ENCODE measurements at regions of chr1 and their contacts with region 1.

Region 1: GRCh38 chr1:234610348-234611152 is 572 bp upstream of the IRF2BP2 start:
- DNase-seq: peak; percentile 97 to 98 (median 97)
- ATAC-seq: peak; percentile 42 to 85 (median 72)
- H3K4me3 ChIP-seq: peak overlapping the region; percentile 32 to 93 (median 62)
- H3K27ac ChIP-seq: peak overlapping the region; percentile 94 to 100 (median 99)
- H3K4me1 ChIP-seq: peaks cover 9 to 43% (median 32%) of the 10 kb centered on the region in 12 donors
- H3K27me3 ChIP-seq: no peaks in the 10 kb centered on the region
- CTCF ChIP-seq: peak in 1 of 12 donors; percentile 7
- POLR2A ChIP-seq: peak; percentile 61 to 99

Region 2: GRCh38 chr1:234553156-234553863 is 57.2 kb before region 1 on chr1:
- intact Hi-C with region 1: no loop called
- DNase-seq: peak in 2 of 5 donors; percentile 45 to 71
- ATAC-seq: peak; percentile 63 to 93 (median 90)
- H3K4me3 ChIP-seq: no peak overlapping the region
- H3K27ac ChIP-seq: peak overlapping the region in 11 of 12 donors; percentile 17 to 85 (median 68)
- H3K4me1 ChIP-seq: peaks cover 0 to 25% (median 19%) of the 10 kb centered on the region in 12 donors
- H3K27me3 ChIP-seq: no peaks in the 10 kb centered on the region
- CTCF ChIP-seq: no peak
- POLR2A ChIP-seq: no peak

Region 3: DNA sequence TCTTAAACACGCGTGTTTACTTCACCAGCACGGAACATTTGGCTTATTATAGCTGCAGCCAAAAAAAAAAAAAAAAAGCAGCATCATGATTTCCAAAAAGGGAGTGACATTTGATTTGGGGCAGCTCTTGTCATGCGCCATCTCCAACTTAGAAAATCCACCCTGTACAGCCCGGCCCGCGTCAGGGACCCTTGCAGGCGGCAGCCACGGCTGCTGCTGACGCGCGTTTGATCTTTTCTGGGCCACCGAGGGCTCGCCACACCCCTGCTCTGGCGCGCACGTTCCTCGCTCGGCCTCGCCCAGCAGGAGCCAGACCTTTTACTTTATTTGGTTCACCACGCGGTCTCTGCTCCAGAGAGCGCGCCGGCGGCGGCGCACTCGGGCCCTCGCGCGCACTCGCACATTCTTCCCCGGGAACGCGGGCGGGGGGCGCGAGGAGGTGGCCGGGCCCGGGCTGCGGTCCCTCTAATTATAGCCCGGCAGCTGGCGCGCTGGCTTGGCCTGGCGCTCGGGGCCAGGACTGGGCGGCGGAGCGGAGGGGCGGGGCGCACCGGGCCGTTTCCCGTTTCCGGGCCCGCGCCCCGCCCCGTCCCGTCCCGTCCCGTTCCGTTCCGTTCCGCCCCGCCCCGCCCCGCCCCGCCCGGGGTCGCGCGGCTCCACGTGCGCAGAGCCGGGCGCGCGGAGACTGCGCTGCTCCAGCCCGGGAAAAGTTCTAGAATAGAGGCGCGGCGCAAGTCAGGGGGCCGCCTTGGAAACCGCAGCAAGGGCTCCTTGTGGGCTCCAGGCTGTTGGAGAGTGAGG is 10.7 kb before region 1 on chr1:
- intact Hi-C with region 1: loop called in 1 of 10 experiments (anchors 2 kb)
- DNase-seq: peak; percentile 91 to 96 (median 94)
- ATAC-seq: peak; percentile 77 to 95 (median 88)
- H3K4me3 ChIP-seq: peak overlapping the region in 11 of 12 donors; percentile 29 to 86 (median 51)
- H3K27ac ChIP-seq: peak overlapping the region; percentile 88 to 100 (median 99)
- H3K4me1 ChIP-seq: peaks cover 29 to 66% (median 50%) of the 10 kb centered on the region in 12 donors
- H3K27me3 ChIP-seq: no peaks in the 10 kb centered on the region
- CTCF ChIP-seq: peak in 1 of 12 donors; percentile 10
- POLR2A ChIP-seq: peak in 1 of 2 donors; percentile 74

Region 4: GRCh38 chr1:234862944-234863515 is 252.5 kb after region 1 on chr1:
- intact Hi-C with region 1: loop called in 1 of 10 experiments (anchors 5 kb)
- DNase-seq: peak; percentile 79 to 88 (median 85)
- ATAC-seq: peak; percentile 62 to 79 (median 73)
- H3K4me3 ChIP-seq: peak overlapping the region in 5 of 12 donors; percentile 1 to 27 (median 8)
- H3K27ac ChIP-seq: peak overlapping the region; percentile 63 to 82 (median 77)
- H3K4me1 ChIP-seq: peaks cover 0 to 46% (median 32%) of the 10 kb centered on the region in 12 donors
- H3K27me3 ChIP-seq: no peaks in the 10 kb centered on the region
- CTCF ChIP-seq: no peak
- POLR2A ChIP-seq: no peak

Region 5: DNA sequence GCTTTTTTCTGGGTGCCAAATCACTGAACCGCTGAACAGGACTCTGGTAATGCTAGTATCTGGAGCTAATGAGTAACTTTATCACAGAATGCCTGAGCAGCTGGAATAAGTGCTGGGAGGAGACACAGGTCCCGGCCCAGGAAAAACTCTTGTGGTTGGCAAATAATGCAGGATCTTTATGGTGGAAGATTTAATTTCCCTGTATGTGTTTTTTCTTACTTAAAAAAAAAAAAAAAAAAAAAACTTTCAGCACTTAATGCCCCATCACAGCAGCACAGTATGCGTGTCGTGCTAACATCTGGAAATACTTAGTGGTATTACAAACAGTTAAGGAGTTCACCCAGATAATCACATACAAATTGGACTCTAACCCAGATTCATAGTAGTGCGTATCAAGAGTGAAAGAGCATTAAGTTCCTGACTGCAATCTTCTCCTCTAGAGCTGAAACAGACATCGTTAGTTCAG is 297.4 kb after region 1 on chr1:
- intact Hi-C with region 1: loop called in 3 of 10 experiments (anchors 2 to 10 kb)
- DNase-seq: no peak
- ATAC-seq: peak; percentile 46 to 81 (median 60)
- H3K4me3 ChIP-seq: no peak overlapping the region
- H3K27ac ChIP-seq: peak overlapping the region; percentile 0 to 90 (median 65)
- H3K4me1 ChIP-seq: peaks cover 6 to 54% (median 30%) of the 10 kb centered on the region in 12 donors
- H3K27me3 ChIP-seq: no peaks in the 10 kb centered on the region
- CTCF ChIP-seq: no peak
- POLR2A ChIP-seq: no peak

Region 6: GRCh38 chr1:234978397-234979295 is 368.1 kb after region 1 on chr1:
- intact Hi-C with region 1: loop called in 3 of 10 experiments (anchors 10 kb)
- DNase-seq: peak in 4 of 5 donors; percentile 48 to 71 (median 60)
- ATAC-seq: peak; percentile 7 to 51 (median 22)
- H3K4me3 ChIP-seq: peak overlapping the region in 2 of 12 donors; percentile 15 to 55
- H3K27ac ChIP-seq: peak overlapping the region; percentile 71 to 98 (median 88)
- H3K4me1 ChIP-seq: peaks cover 15 to 91% (median 45%) of the 10 kb centered on the region in 12 donors
- H3K27me3 ChIP-seq: no peaks in the 10 kb centered on the region
- CTCF ChIP-seq: peak in 5 of 12 donors; percentile 6 to 39 (median 19)
- POLR2A ChIP-seq: no peak

Measured in heart left ventricle (tissue), 16 donors.